Prostate gland (tissue), 2 donors: ENCODE measurements at regions of chr12 and their contacts with region 1.

Region 1: GRCh38 chr12:10721651-10722501 is 1.2 kb downstream of the YBX3 start:
- DNase-seq: peak; percentile 96
- H3K4me3 ChIP-seq: peak overlapping the region; percentile 66 to 97
- H3K27ac ChIP-seq: peak overlapping the region; percentile 93 to 98
- H3K4me1 ChIP-seq: peaks cover 23% of the 10 kb centered on the region
- H3K27me3 ChIP-seq: no peaks in the 10 kb centered on the region
- CTCF ChIP-seq: no peak
- POLR2A ChIP-seq: peak; percentile 50

Region 2: GRCh38 chr12:10212201-10213131 is 509.4 kb before region 1 on chr12 and contains the start of gene GABARAPL1:
- intact Hi-C with region 1: loop called (anchors 2 kb)
- DNase-seq: peak; percentile 98
- H3K4me3 ChIP-seq: peak within 1 kb of the TSS; percentile 59 to 71
- H3K27ac ChIP-seq: peak within 1 kb of the TSS; percentile 98
- H3K4me1 ChIP-seq: no peaks in the 10 kb centered on the region
- H3K27me3 ChIP-seq: no peaks in the 10 kb centered on the region
- CTCF ChIP-seq: peak in 2 of 4 experiments; percentile 19 to 31
- POLR2A ChIP-seq: peak; percentile 93
- total RNA-seq, gene GABARAPL1: 78.2 to 95.9 TPM

Region 3: DNA sequence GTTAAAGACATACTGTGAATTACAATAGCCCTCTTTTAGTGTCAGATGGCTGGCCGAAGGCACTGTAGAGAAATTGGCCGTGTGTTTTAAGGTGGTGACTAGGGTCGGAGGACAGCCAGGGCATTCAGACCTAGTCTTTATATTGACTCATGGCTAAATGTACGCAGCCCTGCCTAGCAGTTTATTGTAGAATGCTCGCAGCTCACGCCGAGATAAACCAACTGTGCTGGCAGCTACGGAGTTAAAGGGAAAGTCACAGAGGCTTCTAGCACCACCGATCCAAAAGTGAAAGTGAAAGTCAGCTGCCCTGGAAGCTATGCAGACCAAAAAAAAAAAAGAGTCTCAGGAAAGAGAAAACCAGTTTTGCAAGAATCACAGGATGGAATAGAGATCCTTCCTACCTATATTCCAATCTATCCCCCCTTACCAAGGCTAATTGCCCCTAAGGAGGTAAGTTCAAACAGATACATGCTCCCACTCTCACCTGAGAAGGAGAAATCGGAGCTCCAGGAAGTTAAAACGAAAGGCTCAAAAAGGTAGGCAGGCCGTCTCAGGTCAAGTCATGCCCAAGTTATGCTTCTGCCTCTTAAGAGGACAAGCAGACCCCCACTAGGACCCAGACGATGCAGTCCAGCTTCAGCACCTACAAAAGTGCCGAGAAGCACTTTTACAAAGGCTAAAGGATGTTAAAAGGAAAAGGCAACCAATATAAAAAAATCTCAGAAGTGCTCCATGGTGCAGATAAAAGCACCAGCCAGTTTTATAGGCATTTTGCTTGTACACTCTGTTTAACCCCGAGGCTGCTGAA is 356.9 kb before region 1 on chr12:
- intact Hi-C with region 1: loop called (anchors 5 kb)
- DNase-seq: peak; percentile 72
- H3K4me3 ChIP-seq: peak overlapping the region; percentile 54 to 57
- H3K27ac ChIP-seq: peak overlapping the region; percentile 99 to 100
- H3K4me1 ChIP-seq: peaks cover 15% of the 10 kb centered on the region
- H3K27me3 ChIP-seq: no peaks in the 10 kb centered on the region
- CTCF ChIP-seq: no peak
- POLR2A ChIP-seq: no peak

Region 4: DNA sequence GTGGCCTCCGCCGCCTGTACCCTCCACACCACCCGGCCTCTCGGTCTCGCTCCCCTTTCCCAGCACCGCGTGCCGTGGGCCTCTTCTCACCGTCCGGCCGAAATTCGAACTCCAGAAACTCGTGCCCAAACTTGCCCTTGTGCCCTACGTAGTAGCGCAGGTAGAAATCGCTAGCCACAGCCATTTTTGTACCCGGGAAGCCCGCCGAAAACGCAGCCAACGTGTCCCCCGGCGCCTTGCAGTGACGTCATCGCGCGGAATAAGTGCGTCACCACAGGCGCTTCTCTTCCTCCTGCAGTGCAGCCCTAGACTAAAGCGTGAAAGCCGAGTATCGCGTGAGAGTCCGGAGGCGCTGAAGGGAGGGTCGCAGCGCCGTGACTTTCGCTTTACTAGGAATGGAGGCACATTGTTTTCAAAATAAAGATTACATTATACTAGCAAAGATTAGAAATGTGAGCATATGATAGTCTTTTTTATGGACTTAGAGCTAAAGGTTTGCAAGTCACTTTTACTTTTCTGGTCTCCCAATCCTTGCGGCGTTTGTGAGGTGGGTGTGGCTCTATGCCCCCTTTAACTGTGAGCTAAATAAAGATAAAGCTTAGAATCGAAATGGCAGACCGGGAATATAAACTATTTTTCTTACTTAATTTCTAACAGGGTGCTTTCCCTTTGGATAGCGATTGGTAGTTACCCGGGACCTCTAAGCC is 108.4 kb before region 1 on chr12 and contains the start of gene MAGOHB:
- intact Hi-C with region 1: loop called (anchors 5 kb)
- DNase-seq: peak; percentile 91
- H3K4me3 ChIP-seq: peak within 1 kb of the TSS; percentile 47 to 71
- H3K27ac ChIP-seq: peak within 1 kb of the TSS; percentile 78 to 88
- H3K4me1 ChIP-seq: no peaks in the 10 kb centered on the region
- H3K27me3 ChIP-seq: no peaks in the 10 kb centered on the region
- CTCF ChIP-seq: peak in 2 of 4 experiments; percentile 32 to 36
- POLR2A ChIP-seq: peak; percentile 91
- total RNA-seq, gene MAGOHB: 24.2 to 24.8 TPM